CD4-positive, alpha-beta T cell (primary cell): ENCODE measurements at regions of chr5 and their contacts with region 1.

Region 1: GRCh38 chr5:36739751-36740221 is 133.4 kb downstream of the SLC1A3 start:
- DNase-seq: peak; percentile 38 to 80 (median 64)
- ATAC-seq: peak; percentile 94
- H3K4me3 ChIP-seq: no peak overlapping the region
- H3K4me3 Mint-ChIP-seq: no peak overlapping the region
- H3K27ac ChIP-seq: no peak overlapping the region
- H3K27ac Mint-ChIP-seq: no peak overlapping the region
- H3K4me1 ChIP-seq: peaks cover 7% of the 10 kb centered on the region
- H3K4me1 Mint-ChIP-seq: no peaks in the 10 kb centered on the region
- H3K27me3 ChIP-seq: peaks cover 6 to 19% of the 10 kb centered on the region in 2 experiments
- H3K27me3 Mint-ChIP-seq: peaks cover 43% of the 10 kb centered on the region
- CTCF ChIP-seq: peak; percentile 63

Region 2: DNA sequence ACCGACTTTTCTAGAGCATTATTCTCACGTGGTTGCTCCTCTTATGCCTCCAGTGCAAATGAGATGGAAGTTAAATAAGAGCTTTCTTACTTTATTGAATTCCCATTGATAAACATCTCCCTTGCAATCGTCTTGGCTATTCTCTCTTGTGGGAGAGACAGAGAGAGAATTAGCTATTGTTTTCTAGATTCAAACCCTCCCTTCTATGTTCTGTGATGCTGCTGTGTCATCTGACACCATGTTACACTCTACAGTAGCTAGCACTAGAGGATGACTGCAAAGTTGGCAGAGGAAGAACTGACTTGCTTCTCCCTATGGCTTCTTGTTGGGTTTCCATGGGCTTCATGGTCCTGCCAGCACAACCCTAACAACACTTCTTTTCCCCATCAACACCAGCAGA is 303.5 kb before region 1 on chr5:
- CTCF ChIA-PET with region 1: no interaction called
- POLR2A ChIA-PET with region 1: no interaction called
- intact Hi-C with region 1: no loop called
- DNase-seq: no peak
- ATAC-seq: no peak
- H3K4me3 ChIP-seq: no peak overlapping the region
- H3K4me3 Mint-ChIP-seq: no peak overlapping the region
- H3K27ac ChIP-seq: no peak overlapping the region
- H3K27ac Mint-ChIP-seq: no peak overlapping the region
- H3K4me1 ChIP-seq: no peaks in the 10 kb centered on the region
- H3K4me1 Mint-ChIP-seq: no peaks in the 10 kb centered on the region
- H3K27me3 ChIP-seq: no peaks in the 10 kb centered on the region
- H3K27me3 Mint-ChIP-seq: peaks cover 23% of the 10 kb centered on the region
- CTCF ChIP-seq: no peak

Region 3: GRCh38 chr5:36870399-36871040 is 130.7 kb after region 1 on chr5:
- CTCF ChIA-PET with region 1: interaction called, 8 read pairs
- POLR2A ChIA-PET with region 1: interaction called, 5 read pairs
- intact Hi-C with region 1: loop called in 1 of 2 experiments (anchors 1 kb)
- DNase-seq: peak in 3 of 14 experiments; percentile 81 to 83 (median 81)
- ATAC-seq: peak; percentile 73
- H3K4me3 ChIP-seq: no peak overlapping the region
- H3K4me3 Mint-ChIP-seq: peak overlapping the region; percentile 2
- H3K27ac ChIP-seq: no peak overlapping the region
- H3K27ac Mint-ChIP-seq: peak overlapping the region; percentile 21
- H3K4me1 ChIP-seq: peaks cover 11% of the 10 kb centered on the region
- H3K4me1 Mint-ChIP-seq: peaks cover 53% of the 10 kb centered on the region
- H3K27me3 ChIP-seq: no peaks in the 10 kb centered on the region
- H3K27me3 Mint-ChIP-seq: no peaks in the 10 kb centered on the region
- CTCF ChIP-seq: peak; percentile 72

Region 4: DNA sequence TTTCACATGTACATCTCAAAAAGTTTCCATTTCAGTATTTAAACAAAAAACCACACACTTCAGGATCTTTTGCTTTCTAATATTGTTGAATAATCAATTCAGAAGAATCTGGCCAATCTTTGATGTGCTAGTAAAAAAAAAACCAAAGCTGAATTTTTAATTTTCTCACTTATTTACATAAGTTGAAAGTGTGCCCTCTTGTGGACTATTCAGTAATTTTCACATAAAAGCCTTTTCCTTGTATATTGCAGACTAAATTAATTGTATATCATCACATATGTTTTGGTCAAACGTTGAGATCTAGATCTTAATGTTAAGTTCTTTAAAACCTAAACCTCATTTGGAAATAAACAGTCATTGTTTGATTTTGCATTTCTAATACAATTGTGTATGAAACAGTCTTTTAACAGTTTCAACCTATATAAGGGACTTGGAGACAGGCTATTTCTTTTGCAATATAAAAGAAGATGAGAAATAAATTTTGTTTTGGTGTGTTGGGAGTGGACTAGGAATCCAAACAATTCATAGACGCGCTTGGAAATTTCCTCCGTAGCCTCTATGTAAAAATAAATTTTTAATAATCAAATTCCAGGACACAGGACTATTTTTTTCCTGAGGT is 204.9 kb after region 1 on chr5:
- CTCF ChIA-PET with region 1: interaction called, 3 read pairs
- POLR2A ChIA-PET with region 1: no interaction called
- intact Hi-C with region 1: loop called (anchors 2 to 5 kb)
- DNase-seq: peak in 3 of 14 experiments; percentile 58 to 75 (median 75)
- ATAC-seq: no peak
- H3K4me3 ChIP-seq: no peak overlapping the region
- H3K4me3 Mint-ChIP-seq: no peak overlapping the region
- H3K27ac ChIP-seq: no peak overlapping the region
- H3K27ac Mint-ChIP-seq: peak overlapping the region; percentile 7
- H3K4me1 ChIP-seq: no peaks in the 10 kb centered on the region
- H3K4me1 Mint-ChIP-seq: peaks cover 75% of the 10 kb centered on the region
- H3K27me3 ChIP-seq: no peaks in the 10 kb centered on the region
- H3K27me3 Mint-ChIP-seq: no peaks in the 10 kb centered on the region
- CTCF ChIP-seq: peak; percentile 79

Region 5: DNA sequence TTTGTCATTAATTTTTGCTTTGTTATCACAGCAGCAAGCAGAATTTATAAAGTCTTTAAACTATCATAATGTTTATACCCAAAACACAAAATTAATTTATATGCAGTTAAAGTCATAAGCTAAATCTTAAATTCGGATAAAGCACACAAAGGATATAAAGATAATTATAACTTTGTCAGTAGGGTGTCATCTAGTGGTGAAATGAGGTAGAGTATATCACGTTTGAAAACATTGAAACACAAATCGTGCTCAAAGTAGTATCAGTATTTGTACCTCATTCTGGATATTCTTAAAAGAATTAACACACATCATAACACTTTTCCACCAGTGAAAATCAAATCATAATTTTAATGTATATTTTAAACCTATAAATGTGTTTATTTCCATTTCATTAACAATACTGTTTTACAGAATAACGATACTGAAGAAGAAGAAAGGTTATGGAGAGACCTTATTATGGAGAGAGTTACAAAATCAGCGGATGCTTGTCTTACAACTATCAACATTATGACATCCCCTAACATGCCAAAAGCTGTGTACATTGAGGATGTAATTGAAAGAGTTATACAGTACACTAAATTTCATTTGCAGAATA is 266.3 kb after region 1 on chr5:
- CTCF ChIA-PET with region 1: interaction called, 5 read pairs
- POLR2A ChIA-PET with region 1: no interaction called
- intact Hi-C with region 1: loop called (anchors 2 to 5 kb)
- DNase-seq: peak in 3 of 14 experiments; percentile 16 to 26 (median 26)
- ATAC-seq: peak; percentile 39
- H3K4me3 ChIP-seq: no peak overlapping the region
- H3K4me3 Mint-ChIP-seq: no peak overlapping the region
- H3K27ac ChIP-seq: no peak overlapping the region
- H3K27ac Mint-ChIP-seq: no peak overlapping the region
- H3K4me1 ChIP-seq: no peaks in the 10 kb centered on the region
- H3K4me1 Mint-ChIP-seq: no peaks in the 10 kb centered on the region
- H3K27me3 ChIP-seq: no peaks in the 10 kb centered on the region
- H3K27me3 Mint-ChIP-seq: no peaks in the 10 kb centered on the region
- CTCF ChIP-seq: peak; percentile 56

Region 6: DNA sequence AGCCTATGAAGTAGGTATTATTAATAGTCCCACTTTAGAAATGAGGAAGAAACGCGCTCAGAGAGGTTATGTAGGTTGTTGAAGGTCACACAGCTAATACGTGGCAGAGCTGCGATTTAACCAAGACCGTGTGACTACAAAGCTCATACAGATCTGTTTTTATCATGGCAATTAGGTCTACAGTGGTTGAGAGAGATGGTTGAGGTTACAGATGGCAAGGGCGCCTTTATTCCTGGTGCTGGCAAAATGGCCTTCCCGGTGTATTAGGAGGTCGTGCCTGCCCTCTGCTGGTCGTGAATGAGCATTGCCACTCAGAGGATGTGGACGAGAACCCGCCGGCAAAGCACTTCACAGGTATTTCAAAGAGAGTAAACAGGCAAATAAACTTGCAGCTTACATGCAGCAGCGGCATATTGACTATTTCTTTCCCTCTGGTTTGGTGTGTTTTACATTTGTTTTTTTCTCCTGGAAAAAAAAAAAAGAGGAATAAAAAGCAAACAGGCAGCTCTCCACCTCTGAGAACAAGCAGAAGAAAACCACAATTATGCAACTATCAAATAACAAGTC is 1453.3 kb after region 1 on chr5:
- CTCF ChIA-PET with region 1: no interaction called
- POLR2A ChIA-PET with region 1: no interaction called
- intact Hi-C with region 1: loop called in 1 of 2 experiments (anchors 5 kb)
- DNase-seq: peak; percentile 5 to 62 (median 28)
- ATAC-seq: peak; percentile 52
- H3K4me3 ChIP-seq: no peak overlapping the region
- H3K4me3 Mint-ChIP-seq: no peak overlapping the region
- H3K27ac ChIP-seq: no peak overlapping the region
- H3K27ac Mint-ChIP-seq: no peak overlapping the region
- H3K4me1 ChIP-seq: peaks cover 4% of the 10 kb centered on the region
- H3K4me1 Mint-ChIP-seq: peaks cover 6% of the 10 kb centered on the region
- H3K27me3 ChIP-seq: peaks cover 0 to 5% of the 10 kb centered on the region in 2 experiments
- H3K27me3 Mint-ChIP-seq: peaks cover 53% of the 10 kb centered on the region
- CTCF ChIP-seq: peak; percentile 68